MCF 10A (cell line): ENCODE measurements at regions of chr16 and their contacts with region 1.

Region 1: GRCh38 chr16:69123910-69124309 is 8.5 kb downstream of the CHTF8 start:
- DNase-seq: peak; percentile 81
- H3K4me3 Mint-ChIP-seq: no peak overlapping the region
- H3K27ac Mint-ChIP-seq: no peak overlapping the region
- H3K4me1 Mint-ChIP-seq: no peaks in the 10 kb centered on the region
- H3K27me3 Mint-ChIP-seq: no peaks in the 10 kb centered on the region
- CTCF ChIP-seq: peak; percentile 51

Region 2: DNA sequence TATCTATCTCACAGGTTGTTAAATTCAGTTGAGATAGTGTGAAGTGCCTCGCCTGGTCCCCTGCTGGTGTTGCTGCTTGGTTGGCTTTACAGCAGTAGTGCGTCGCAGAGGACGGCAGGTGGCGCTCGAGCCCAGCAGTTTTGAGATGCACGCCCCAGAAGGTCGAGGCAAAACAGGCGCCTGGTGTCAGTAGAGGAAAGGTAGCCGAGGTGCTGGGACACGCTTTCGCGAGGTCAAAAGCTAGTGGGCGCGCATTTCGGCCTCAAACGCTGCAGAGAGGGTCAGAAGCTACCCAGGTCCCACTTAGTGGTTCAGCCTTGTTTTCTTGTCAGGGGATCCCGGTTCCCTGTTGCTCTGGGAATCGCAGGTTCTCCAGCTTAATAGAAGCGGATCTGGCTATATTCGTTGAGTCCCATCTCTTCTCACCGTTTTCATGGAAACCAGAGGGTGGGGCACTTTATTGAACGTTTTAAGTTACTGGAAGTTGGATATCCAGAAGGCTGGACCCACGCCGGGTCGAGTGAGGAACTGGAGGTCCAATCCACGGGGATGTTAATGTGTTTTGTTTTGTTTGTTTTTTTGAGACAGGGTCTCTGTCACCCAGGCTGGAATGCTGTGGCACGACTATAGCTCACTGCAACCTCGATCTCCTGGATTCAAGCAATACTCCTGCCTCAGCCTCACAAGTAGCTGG is 595.1 kb before region 1 on chr16:
- CTCF ChIA-PET with region 1: interaction called, 9 read pairs
- POLR2A ChIA-PET with region 1: no interaction called
- intact Hi-C with region 1: loop called (anchors 5 kb)
- DNase-seq: peak; percentile 89
- H3K4me3 Mint-ChIP-seq: peak overlapping the region; percentile 85
- H3K27ac Mint-ChIP-seq: peak overlapping the region; percentile 85
- H3K4me1 Mint-ChIP-seq: peaks cover 6% of the 10 kb centered on the region
- H3K27me3 Mint-ChIP-seq: no peaks in the 10 kb centered on the region
- CTCF ChIP-seq: peak; percentile 90

Region 3: DNA sequence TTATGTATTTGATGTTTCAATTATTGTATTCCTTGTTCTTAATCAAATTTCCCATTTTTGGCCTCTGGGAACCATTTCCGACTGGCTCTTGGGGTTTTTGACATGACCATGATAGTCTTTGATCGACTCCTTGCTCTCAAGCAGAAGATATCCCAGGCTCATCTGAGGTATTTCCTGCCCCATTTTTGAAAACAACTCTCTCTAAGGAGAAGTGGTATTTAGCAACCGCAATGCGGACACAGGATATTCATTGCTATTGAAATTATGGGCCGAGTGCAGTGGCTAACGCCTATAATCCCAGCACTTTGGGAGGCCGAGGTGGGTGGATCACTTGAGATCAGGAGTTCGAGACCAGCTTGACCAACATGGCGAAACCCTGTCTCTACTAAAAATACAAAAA is 275.1 kb before region 1 on chr16:
- CTCF ChIA-PET with region 1: interaction called, 110 read pairs
- POLR2A ChIA-PET with region 1: interaction called, 10 read pairs
- intact Hi-C with region 1: loop called (anchors 5 kb)
- DNase-seq: no peak
- H3K4me3 Mint-ChIP-seq: no peak overlapping the region
- H3K27ac Mint-ChIP-seq: no peak overlapping the region
- H3K4me1 Mint-ChIP-seq: peaks cover 5% of the 10 kb centered on the region
- H3K27me3 Mint-ChIP-seq: no peaks in the 10 kb centered on the region
- CTCF ChIP-seq: no peak

Region 4: GRCh38 chr16:69040138-69040909 is 83.6 kb before region 1 on chr16:
- CTCF ChIA-PET with region 1: no interaction called
- POLR2A ChIA-PET with region 1: no interaction called
- intact Hi-C with region 1: no loop called
- DNase-seq: peak; percentile 73
- H3K4me3 Mint-ChIP-seq: no peak overlapping the region
- H3K27ac Mint-ChIP-seq: peak overlapping the region; percentile 52
- H3K4me1 Mint-ChIP-seq: peaks cover 11% of the 10 kb centered on the region
- H3K27me3 Mint-ChIP-seq: no peaks in the 10 kb centered on the region
- CTCF ChIP-seq: no peak

Region 5: GRCh38 chr16:69073161-69073669 is 50.7 kb before region 1 on chr16:
- CTCF ChIA-PET with region 1: interaction called, 10 read pairs
- POLR2A ChIA-PET with region 1: no interaction called
- intact Hi-C with region 1: no loop called
- DNase-seq: peak; percentile 96
- H3K4me3 Mint-ChIP-seq: peak overlapping the region; percentile 30
- H3K27ac Mint-ChIP-seq: peak overlapping the region; percentile 90
- H3K4me1 Mint-ChIP-seq: peaks cover 26% of the 10 kb centered on the region
- H3K27me3 Mint-ChIP-seq: no peaks in the 10 kb centered on the region
- CTCF ChIP-seq: no peak

Region 6: GRCh38 chr16:69112285-69113129 is 11.4 kb before region 1 on chr16:
- CTCF ChIA-PET with region 1: interaction called, 63 read pairs
- POLR2A ChIA-PET with region 1: interaction called, 4 read pairs
- intact Hi-C with region 1: no loop called
- DNase-seq: peak; percentile 55
- H3K4me3 Mint-ChIP-seq: no peak overlapping the region
- H3K27ac Mint-ChIP-seq: peak overlapping the region; percentile 71
- H3K4me1 Mint-ChIP-seq: no peaks in the 10 kb centered on the region
- H3K27me3 Mint-ChIP-seq: no peaks in the 10 kb centered on the region
- CTCF ChIP-seq: peak; percentile 67

Region 7: GRCh38 chr16:69176033-69176800 is 52.3 kb after region 1 on chr16:
- CTCF ChIA-PET with region 1: no interaction called
- POLR2A ChIA-PET with region 1: no interaction called
- intact Hi-C with region 1: no loop called
- DNase-seq: no peak
- H3K4me3 Mint-ChIP-seq: no peak overlapping the region
- H3K27ac Mint-ChIP-seq: no peak overlapping the region
- H3K4me1 Mint-ChIP-seq: peaks cover 26% of the 10 kb centered on the region
- H3K27me3 Mint-ChIP-seq: no peaks in the 10 kb centered on the region
- CTCF ChIP-seq: no peak